ENCODE measurements at regions of chr17 and their contacts with region 1.

Region 1: DNA sequence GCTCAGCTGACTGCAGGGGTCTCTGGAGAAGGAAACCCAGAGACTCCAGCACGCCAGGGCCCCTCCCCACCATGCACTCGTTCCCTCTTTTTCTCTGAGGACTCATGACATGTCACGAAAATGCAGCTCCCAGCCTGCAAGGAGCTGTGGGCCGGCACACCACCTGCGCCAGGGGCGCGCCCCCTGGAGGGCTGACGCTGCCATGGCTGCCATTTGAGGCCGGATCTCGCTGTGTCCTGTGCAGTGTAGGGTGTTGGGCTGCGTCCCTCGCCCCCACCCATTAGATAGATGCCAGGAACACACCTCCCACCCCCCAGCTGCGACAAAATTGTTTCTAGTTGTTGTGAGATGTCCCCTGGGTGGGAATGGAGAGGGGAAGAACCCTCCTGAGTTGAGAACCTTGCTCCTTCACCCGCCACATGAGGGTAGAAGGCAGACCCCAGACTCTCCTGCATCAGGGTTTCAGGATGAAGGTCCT is 8.2 kb downstream of the SYNGR2 start:
- DNase-seq: peak in 1 of 2 experiments; percentile 92
- H3K4me3 ChIP-seq: no peak overlapping the region
- H3K27ac ChIP-seq: no peak overlapping the region
- H3K4me1 ChIP-seq: peaks cover 5 to 17% (median 7%) of the 10 kb centered on the region in 4 experiments
- H3K27me3 ChIP-seq: no peaks in the 10 kb centered on the region
- CTCF ChIP-seq: peak; percentile 89 to 99 (median 94)
- EP300 ChIP-seq: no peak
- POLR2A ChIP-seq: peak in 1 of 2 experiments; percentile 49; a peak in 1 of 3 replicates
- RAD21 ChIP-seq: peak; percentile 48 to 70

Region 2: DNA sequence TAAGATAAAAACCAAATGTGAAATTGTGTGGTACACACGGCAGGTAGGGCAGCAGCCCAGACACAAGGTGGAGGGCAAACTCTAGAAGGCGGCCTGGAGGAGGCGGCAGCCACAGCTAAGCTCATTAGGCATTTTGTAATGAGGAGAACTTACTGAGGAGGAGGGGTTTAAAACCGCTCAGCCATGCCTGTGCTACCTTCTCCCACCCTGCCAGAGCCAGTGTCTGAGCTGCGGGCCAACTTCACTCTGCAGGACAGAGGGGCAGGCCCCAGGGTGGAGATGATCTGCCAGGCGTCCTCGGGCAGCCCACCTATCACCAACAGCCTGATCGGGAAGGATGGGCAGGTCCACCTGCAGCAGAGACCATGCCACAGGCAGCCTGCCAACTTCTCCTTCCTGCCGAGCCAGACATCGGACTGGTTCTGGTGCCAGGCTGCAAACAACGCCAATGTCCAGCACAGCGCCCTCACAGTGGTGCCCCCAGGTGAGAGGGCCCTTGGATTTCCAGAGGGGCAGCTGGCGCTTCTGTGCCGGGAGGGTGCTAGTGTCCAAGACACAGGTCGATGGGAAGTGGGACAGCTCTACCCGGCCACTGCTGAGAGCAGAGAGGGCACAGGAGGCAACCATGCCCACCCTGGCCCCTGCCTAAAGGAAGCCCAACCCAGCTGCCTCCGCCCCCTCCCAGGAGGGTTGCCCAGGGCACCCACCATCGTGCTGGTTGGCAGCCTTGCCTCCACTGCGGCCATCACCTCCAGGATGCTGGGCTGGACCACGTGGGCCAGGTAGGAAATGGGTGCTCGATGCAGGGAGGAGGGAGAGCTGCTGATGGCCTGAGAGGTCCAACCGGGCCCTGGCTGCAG is 12.5 kb before region 1 on chr17:
- CTCF ChIA-PET with region 1: interaction called, 27 read pairs
- POLR2A ChIA-PET with region 1: interaction called, 8 read pairs
- DNase-seq: no peak
- H3K4me3 ChIP-seq: no peak overlapping the region
- H3K27ac ChIP-seq: no peak overlapping the region
- H3K4me1 ChIP-seq: peaks cover 0 to 12% (median 6%) of the 10 kb centered on the region in 4 experiments; a peak in 6 of 7 replicates
- H3K27me3 ChIP-seq: no peaks in the 10 kb centered on the region
- CTCF ChIP-seq: 0 out of 4 replicates have a peak, but pooled peaks of 1 of the 3 experiments have one; percentile 3
- EP300 ChIP-seq: no peak
- POLR2A ChIP-seq: no peak
- RAD21 ChIP-seq: no peak

Region 3: DNA sequence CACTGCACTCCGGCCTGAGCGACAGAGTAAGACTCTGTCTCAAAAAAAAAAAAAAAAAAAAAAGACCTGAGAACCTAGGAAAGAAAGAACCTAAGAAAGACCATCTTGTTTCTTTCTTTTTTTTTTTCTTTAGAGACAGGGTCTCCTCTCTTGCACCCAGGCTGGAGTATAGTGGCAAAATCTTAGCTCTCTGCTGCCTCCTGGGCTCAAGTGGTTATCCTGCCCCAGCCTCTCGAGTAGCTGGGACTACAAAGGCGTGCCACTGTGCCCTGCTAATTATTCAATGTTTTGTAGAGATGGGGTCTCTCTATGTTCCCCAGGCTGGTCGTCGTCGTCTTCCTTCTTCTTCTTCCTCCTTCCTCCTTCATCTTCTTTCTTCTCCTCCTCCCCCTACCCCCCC is 29.7 kb after region 1 on chr17:
- CTCF ChIA-PET with region 1: interaction called, 11 read pairs
- POLR2A ChIA-PET with region 1: interaction called, 4 read pairs
- DNase-seq: no peak
- H3K4me3 ChIP-seq: no peak overlapping the region
- H3K27ac ChIP-seq: no peak overlapping the region
- H3K4me1 ChIP-seq: no peaks in the 10 kb centered on the region
- H3K27me3 ChIP-seq: no peaks in the 10 kb centered on the region
- CTCF ChIP-seq: peak; percentile 34 to 43 (median 34); a peak in 3 of 4 replicates
- EP300 ChIP-seq: no peak
- POLR2A ChIP-seq: no peak
- RAD21 ChIP-seq: peak; percentile 22 to 54; a peak in 3 of 4 replicates

Measured in H1 (cell line).